ENCODE measurements at regions of chr3 and their contacts with region 1.

Region 1: GRCh38 chr3:56758539-56758981 is 43.2 kb downstream of the ARHGEF3 start:
- DNase-seq: peak; percentile 86 to 94 (median 87)
- H3K4me3 ChIP-seq: peak overlapping the region in 2 of 3 experiments; percentile 27 to 29
- H3K4me3 Mint-ChIP-seq: peak overlapping the region; percentile 34 to 61
- H3K27ac ChIP-seq: peak overlapping the region; percentile 67 to 89
- H3K27ac Mint-ChIP-seq: peak overlapping the region; percentile 95 to 98 (median 97)
- H3K4me1 ChIP-seq: peaks cover 58 to 62% of the 10 kb centered on the region in 2 donors
- H3K4me1 Mint-ChIP-seq: peaks cover 74% of the 10 kb centered on the region
- H3K27me3 ChIP-seq: no peaks in the 10 kb centered on the region
- H3K27me3 Mint-ChIP-seq: peaks cover 0 to 4% (median 0%) of the 10 kb centered on the region in 3 donors
- CTCF ChIP-seq: no peak

Region 2: DNA sequence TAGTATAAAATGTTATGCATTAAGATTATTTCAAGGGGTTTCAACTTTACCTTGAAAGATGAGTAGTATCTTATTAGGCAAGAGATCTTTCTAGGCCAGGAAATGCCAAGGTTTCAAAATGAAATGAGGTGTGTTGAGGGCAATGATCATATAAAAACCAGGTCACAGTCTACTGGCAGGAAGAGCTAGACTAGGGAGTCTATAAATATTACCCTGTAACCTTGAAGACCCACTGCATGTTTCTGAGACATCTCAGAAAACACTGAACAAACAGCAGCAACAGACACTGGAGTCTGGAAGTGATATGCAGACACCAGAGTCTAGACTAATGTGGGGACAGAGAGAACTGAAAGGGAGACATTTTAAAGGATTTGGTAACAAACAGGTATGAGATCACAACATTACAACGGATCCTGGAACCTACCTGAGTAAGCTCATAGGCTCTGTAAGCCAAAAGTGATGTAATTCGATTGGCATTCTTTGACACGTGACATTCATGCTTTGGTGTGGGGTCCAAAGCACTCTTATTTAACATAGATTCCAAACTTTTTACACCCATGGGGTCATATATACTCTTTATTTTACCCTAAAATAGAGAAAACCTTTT is 90.5 kb before region 1 on chr3:
- intact Hi-C with region 1: no loop called
- DNase-seq: no peak
- H3K4me3 ChIP-seq: no peak overlapping the region
- H3K4me3 Mint-ChIP-seq: no peak overlapping the region
- H3K27ac ChIP-seq: no peak overlapping the region
- H3K27ac Mint-ChIP-seq: no peak overlapping the region
- H3K4me1 ChIP-seq: no peaks in the 10 kb centered on the region
- H3K4me1 Mint-ChIP-seq: no peaks in the 10 kb centered on the region
- H3K27me3 ChIP-seq: no peaks in the 10 kb centered on the region
- H3K27me3 Mint-ChIP-seq: no peaks in the 10 kb centered on the region
- CTCF ChIP-seq: no peak

Region 3: DNA sequence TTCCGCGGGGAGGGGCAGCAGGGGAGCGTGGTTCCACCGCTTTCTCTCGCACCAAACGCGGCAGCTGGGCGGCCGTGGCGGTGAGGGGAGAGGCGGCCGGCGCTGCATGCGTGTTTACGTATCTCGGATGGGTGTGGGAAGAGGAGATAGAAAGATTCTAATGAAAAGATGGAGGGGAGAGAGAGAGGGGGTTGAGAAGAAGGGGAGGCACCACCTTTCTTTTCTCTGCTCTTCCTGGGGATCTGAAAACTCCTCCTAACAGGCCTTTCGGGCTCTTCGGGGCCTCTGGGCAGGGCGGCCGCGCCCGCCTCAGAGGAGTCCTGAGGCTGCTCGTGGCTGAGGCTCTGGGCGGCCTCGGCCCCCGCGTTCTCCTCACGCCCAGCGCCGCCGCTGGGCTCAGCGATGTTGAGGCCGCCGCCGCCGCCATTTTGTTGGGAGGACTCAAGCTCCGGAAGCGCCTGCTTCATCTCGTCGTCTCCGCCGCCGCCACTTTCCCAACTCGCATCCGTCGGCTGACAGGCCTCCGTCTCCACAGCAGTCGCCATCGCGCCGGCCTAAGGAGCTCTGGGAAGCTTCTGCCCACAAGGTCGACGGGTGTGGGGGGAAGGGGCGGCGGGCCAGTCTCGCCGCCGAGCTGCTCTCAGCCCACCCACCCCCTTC is 76.0 kb before region 1 on chr3:
- intact Hi-C with region 1: loop called in 1 of 2 experiments (anchors 5 kb)
- DNase-seq: peak; percentile 62 to 73 (median 67)
- H3K4me3 ChIP-seq: peak overlapping the region; percentile 58 to 92 (median 72)
- H3K4me3 Mint-ChIP-seq: peak overlapping the region; percentile 92 to 95
- H3K27ac ChIP-seq: peak overlapping the region; percentile 93 to 95
- H3K27ac Mint-ChIP-seq: peak overlapping the region; percentile 92 to 97 (median 96)
- H3K4me1 ChIP-seq: peaks cover 20 to 37% of the 10 kb centered on the region in 2 donors
- H3K4me1 Mint-ChIP-seq: peaks cover 34% of the 10 kb centered on the region
- H3K27me3 ChIP-seq: no peaks in the 10 kb centered on the region
- H3K27me3 Mint-ChIP-seq: peaks cover 0 to 3% (median 0%) of the 10 kb centered on the region in 3 donors
- CTCF ChIP-seq: no peak

Region 4: DNA sequence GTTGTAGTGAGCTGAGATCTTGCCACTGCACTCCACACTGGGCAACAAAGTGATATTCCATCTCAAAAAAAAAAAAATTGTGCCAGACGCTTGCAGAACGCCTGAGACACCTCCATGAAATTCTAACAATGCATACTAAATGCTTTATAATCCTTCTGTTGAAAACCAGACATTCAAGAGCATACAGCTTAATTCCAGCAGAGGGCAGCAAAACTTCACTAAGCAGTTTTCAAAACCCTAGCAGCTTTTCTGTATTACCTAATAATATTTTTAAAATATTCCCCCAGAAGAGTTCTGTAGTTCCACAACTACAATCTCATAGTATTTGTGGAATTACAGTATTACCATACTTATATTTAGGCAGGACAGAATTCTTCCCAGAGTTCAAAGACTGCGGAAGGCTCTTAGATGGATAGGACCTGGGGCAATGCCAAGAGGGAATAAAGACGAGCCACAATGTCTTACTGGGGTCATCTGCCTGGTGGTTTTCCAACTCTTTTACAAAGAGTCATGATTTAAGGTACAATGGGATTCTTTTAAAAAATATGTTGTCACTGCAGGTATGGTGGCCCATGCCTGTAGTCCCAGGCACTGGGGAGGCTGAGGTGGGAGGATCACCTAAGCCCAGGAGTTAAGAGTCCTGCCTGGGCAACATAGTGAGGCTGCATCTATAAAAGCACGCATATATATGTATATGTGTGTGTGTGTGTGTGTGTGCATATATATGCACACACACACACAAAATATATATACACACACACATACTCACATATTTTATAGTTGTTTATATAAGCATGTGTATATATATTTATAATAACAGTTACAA is 55.9 kb before region 1 on chr3:
- intact Hi-C with region 1: loop called in 1 of 2 experiments (anchors 10 kb)
- DNase-seq: peak; percentile 54 to 73 (median 65)
- H3K4me3 ChIP-seq: no peak overlapping the region
- H3K4me3 Mint-ChIP-seq: no peak overlapping the region
- H3K27ac ChIP-seq: no peak overlapping the region
- H3K27ac Mint-ChIP-seq: peak overlapping the region in 1 of 7 donors; percentile 35
- H3K4me1 ChIP-seq: peaks cover 0 to 8% of the 10 kb centered on the region in 2 donors
- H3K4me1 Mint-ChIP-seq: peaks cover 21% of the 10 kb centered on the region
- H3K27me3 ChIP-seq: no peaks in the 10 kb centered on the region
- H3K27me3 Mint-ChIP-seq: peaks cover 0 to 1% (median 0%) of the 10 kb centered on the region in 3 donors
- CTCF ChIP-seq: peak; percentile 77

Measured in CD14-positive monocyte (primary cell).